Psoas muscle (tissue), 8 donors: ENCODE measurements at regions of chr11 and their contacts with region 1.

Region 1: GRCh38 chr11:130213143-130213978 is 53.8 kb downstream of the ST14 start:
- DNase-seq: peak; percentile 63 to 83
- ATAC-seq: peak; percentile 87 to 97 (median 92)
- H3K4me3 ChIP-seq: peak overlapping the region; percentile 15
- H3K27ac ChIP-seq: no peak overlapping the region
- H3K4me1 ChIP-seq: no peaks in the 10 kb centered on the region
- H3K27me3 ChIP-seq: no peaks in the 10 kb centered on the region
- CTCF ChIP-seq: peak; percentile 92

Region 2: GRCh38 chr11:130323452-130324450 is 110.4 kb after region 1 on chr11:
- intact Hi-C with region 1: no loop called
- DNase-seq: no peak
- ATAC-seq: no peak
- H3K4me3 ChIP-seq: no peak overlapping the region
- H3K27ac ChIP-seq: no peak overlapping the region
- H3K4me1 ChIP-seq: no peaks in the 10 kb centered on the region
- H3K27me3 ChIP-seq: no peaks in the 10 kb centered on the region
- CTCF ChIP-seq: no peak

Region 3: GRCh38 chr11:130370845-130371590 is 157.7 kb after region 1 on chr11:
- intact Hi-C with region 1: loop called (anchors 5 to 10 kb)
- DNase-seq: no peak
- ATAC-seq: peak in 1 of 4 donors; percentile 20
- H3K4me3 ChIP-seq: no peak overlapping the region
- H3K27ac ChIP-seq: no peak overlapping the region
- H3K4me1 ChIP-seq: peaks cover 28% of the 10 kb centered on the region
- H3K27me3 ChIP-seq: no peaks in the 10 kb centered on the region
- CTCF ChIP-seq: no peak

Region 4: GRCh38 chr11:130420478-130421198 is 207.3 kb after region 1 on chr11:
- intact Hi-C with region 1: loop called (anchors 5 kb)
- DNase-seq: peak in 1 of 2 donors; percentile 29
- ATAC-seq: no peak
- H3K4me3 ChIP-seq: no peak overlapping the region
- H3K27ac ChIP-seq: no peak overlapping the region
- H3K4me1 ChIP-seq: peaks cover 14% of the 10 kb centered on the region
- H3K27me3 ChIP-seq: peaks cover 0 to 4% (median 0%) of the 10 kb centered on the region in 3 donors
- CTCF ChIP-seq: no peak

Region 5: GRCh38 chr11:130427581-130428315 is 214.4 kb after region 1 on chr11:
- intact Hi-C with region 1: loop called (anchors 5 kb)
- DNase-seq: peak in 1 of 2 donors; percentile 51
- ATAC-seq: peak; percentile 28 to 51 (median 42)
- H3K4me3 ChIP-seq: peak overlapping the region; percentile 63
- H3K27ac ChIP-seq: no peak overlapping the region
- H3K4me1 ChIP-seq: peaks cover 15% of the 10 kb centered on the region
- H3K27me3 ChIP-seq: peaks cover 0 to 37% (median 14%) of the 10 kb centered on the region in 3 donors
- CTCF ChIP-seq: no peak

Region 6: DNA sequence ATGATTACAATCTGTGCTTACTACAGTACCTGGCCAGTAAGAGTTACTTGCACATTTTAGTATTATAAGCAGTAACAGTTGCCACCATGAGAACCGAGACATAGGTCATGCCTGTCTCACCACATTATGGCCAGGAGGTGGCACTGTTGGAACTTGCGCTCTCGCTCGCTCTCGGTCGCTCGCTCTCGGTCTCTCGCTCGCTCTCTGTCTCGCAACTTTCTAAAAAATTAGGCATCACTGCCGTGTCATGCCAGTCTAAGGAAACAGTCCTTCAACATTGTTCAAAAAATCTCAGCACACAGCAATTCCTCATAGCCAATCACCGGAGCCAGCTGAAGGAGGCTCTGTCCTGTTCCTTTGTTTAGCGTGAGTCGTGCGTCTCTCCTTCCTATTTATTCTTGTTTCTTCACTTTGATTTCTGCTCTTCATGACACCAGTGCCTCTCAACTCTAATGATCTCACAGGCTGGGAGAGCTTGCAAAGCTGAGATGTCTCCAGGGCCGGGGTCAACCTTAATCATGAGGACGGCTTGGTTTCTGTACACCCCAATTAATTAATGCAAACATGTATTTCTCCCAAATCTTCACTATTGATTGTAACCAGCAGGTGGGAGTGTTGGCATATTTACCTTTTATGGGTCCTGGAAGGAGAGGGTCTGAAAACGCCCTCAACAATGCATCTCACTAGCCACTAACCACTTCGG is 221.3 kb after region 1 on chr11:
- intact Hi-C with region 1: loop called (anchors 5 kb)
- DNase-seq: peak; percentile 68 to 83
- ATAC-seq: peak; percentile 90 to 95 (median 92)
- H3K4me3 ChIP-seq: peak overlapping the region; percentile 66
- H3K27ac ChIP-seq: peak overlapping the region; percentile 48
- H3K4me1 ChIP-seq: peaks cover 11% of the 10 kb centered on the region
- H3K27me3 ChIP-seq: peaks cover 0 to 11% (median 3%) of the 10 kb centered on the region in 3 donors
- CTCF ChIP-seq: peak; percentile 87

Region 7: GRCh38 chr11:130861902-130862860 is 648.8 kb after region 1 on chr11:
- intact Hi-C with region 1: loop called in 1 of 2 experiments (anchors 10 kb)
- DNase-seq: peak; percentile 90 to 95
- ATAC-seq: peak; percentile 63 to 73 (median 69)
- H3K4me3 ChIP-seq: no peak overlapping the region
- H3K27ac ChIP-seq: peak overlapping the region; percentile 61
- H3K4me1 ChIP-seq: peaks cover 45% of the 10 kb centered on the region
- H3K27me3 ChIP-seq: no peaks in the 10 kb centered on the region
- CTCF ChIP-seq: peak; percentile 100

Region 8: GRCh38 chr11:130894322-130895025 is 681.1 kb after region 1 on chr11:
- intact Hi-C with region 1: loop called in 1 of 2 experiments (anchors 10 kb)
- DNase-seq: peak; percentile 64 to 79
- ATAC-seq: peak; percentile 59 to 74 (median 66)
- H3K4me3 ChIP-seq: no peak overlapping the region
- H3K27ac ChIP-seq: no peak overlapping the region
- H3K4me1 ChIP-seq: peaks cover 29% of the 10 kb centered on the region
- H3K27me3 ChIP-seq: no peaks in the 10 kb centered on the region
- CTCF ChIP-seq: peak; percentile 94